Panc1 (cell line): ENCODE measurements at regions of chr11 and their contacts with region 1.

Region 1: DNA sequence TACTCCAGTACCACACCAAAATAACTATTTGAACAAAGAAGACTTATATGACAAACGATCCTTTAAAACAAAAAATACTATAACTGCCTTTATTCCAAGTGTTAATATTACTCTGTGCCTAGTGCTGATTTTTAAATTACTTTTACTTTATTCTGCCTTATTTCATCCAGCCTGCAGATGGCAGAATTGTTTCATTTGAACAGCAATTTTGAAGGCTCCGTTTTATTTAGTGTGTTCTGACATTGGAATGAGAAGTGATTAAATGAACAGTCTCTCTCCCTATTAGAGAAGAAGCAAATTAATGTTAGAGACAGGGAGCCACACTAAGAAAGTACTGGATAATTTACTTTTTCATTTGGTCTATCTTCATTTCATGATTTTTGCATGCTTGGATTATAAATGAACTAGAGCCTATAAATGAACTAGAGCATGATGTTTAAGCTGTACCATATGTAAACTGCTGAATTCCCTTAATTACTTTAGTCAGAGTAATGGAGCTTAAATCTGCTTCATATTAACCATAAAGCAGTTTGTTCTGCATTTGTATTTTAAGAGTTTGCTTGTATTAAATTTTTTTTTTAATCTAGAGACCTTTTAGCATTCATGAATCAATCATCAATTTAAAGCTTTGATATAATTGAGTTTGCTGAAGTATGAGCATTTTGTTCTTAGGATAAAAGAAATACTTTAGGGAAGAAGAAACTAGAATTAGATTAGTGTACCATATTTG is 9.8 kb downstream of the PDHX start:
- DNase-seq: peak; percentile 47
- ATAC-seq: peak; percentile 83
- H3K4me3 ChIP-seq: no peak overlapping the region
- H3K27ac ChIP-seq: peak overlapping the region; percentile 90
- H3K4me1 ChIP-seq: peaks cover 75% of the 10 kb centered on the region
- H3K27me3 ChIP-seq: no peaks in the 10 kb centered on the region
- CTCF ChIP-seq: peak; percentile 74; the same call in 1 of the 2 replicates

Region 2: DNA sequence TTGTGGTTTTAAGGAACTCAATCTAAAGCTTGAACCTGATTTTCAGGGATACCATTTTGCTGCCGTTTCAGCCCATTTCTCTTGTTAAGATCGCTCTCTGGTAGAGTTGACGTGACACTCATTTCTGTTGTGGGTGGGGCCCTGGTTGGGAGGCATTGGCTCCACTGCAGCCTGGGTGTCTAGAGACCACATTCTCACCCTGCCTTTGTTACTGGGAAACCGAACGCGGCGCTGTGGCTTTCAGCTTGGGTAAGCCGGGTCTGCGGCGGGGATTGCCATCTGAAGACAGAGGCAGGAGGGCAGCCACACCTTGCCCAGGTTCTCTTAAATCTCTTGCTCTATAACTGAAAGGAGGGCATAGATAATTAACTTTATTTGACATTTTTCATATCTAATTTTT is 302.2 kb before region 1 on chr11:
- CTCF ChIA-PET with region 1: no interaction called
- POLR2A ChIA-PET with region 1: no interaction called
- in situ Hi-C with region 1: no loop called
- intact Hi-C with region 1: no loop called
- DNase-seq: no peak
- ATAC-seq: no peak
- H3K4me3 ChIP-seq: no peak overlapping the region
- H3K27ac ChIP-seq: no peak overlapping the region
- H3K4me1 ChIP-seq: no peaks in the 10 kb centered on the region; the same call in 1 of the 2 replicates
- H3K27me3 ChIP-seq: no peaks in the 10 kb centered on the region
- CTCF ChIP-seq: no peak

Region 3: DNA sequence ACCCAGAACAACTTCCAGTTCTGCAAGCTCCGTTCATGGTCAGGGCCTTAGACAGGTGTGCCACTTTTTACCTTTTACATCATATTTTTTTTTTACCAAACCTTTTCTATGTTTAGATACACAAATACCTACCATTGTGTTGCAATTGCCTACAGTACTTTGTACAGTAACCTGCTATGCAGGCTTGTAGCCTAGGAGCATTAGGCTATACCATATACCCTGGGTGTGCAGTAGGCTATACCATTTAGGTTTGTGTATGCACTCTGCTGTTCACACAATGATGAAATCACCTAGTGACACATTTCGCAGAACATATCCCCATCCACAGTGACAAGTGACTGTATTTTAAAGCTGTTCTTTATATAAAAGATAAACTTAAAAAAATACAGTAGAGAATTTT is 39.7 kb before region 1 on chr11:
- CTCF ChIA-PET with region 1: no interaction called
- POLR2A ChIA-PET with region 1: no interaction called
- in situ Hi-C with region 1: no loop called
- intact Hi-C with region 1: no loop called
- DNase-seq: no peak
- ATAC-seq: peak; percentile 51; the same call in 1 of the 2 replicates
- H3K4me3 ChIP-seq: no peak overlapping the region
- H3K27ac ChIP-seq: no peak overlapping the region
- H3K4me1 ChIP-seq: no peaks in the 10 kb centered on the region; the same call in 1 of the 2 replicates
- H3K27me3 ChIP-seq: no peaks in the 10 kb centered on the region
- CTCF ChIP-seq: no peak

Region 4: DNA sequence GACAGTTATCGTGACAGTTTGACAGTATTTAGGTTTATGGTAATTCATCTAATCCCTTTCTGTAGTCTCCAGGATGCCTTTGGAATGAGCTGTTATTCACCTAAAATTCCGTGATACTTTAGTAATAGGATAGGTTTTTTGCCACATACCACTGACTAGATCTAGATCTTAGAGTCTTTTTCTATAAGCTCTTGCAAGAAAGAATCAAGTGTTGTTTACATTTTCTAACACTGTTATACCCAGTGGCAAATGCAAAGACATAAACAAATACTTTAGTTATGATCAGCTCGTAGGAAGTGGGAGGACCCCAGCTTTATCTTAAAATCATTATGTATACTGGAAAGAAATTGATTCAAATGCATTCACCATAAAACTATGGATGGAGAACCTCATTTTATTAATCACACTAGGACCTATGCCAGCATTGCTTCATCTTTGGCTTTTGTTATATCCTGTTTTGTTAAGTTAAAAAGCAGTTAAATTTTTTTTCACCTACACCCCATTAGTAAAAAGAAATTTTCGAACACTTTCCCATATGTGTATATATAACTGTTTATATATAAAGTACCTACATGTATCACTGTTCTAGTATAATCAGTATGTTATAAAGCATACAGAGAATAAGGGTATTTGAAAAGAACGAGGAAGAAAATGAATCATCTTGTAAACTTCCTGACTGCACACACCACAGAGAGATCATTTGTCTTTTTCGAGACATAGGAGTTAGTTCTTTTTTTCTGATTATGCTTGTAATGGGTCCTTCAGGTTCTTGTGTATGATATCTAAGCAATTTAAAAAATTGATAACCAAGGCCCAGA is 51.0 kb after region 1 on chr11:
- CTCF ChIA-PET with region 1: no interaction called
- POLR2A ChIA-PET with region 1: no interaction called
- in situ Hi-C with region 1: loop called (anchors 5 kb)
- intact Hi-C with region 1: no loop called
- DNase-seq: peak; percentile 92
- ATAC-seq: peak; percentile 88
- H3K4me3 ChIP-seq: peak overlapping the region in 1 of 2 experiments; percentile 2; a peak in 1 of 4 replicates
- H3K27ac ChIP-seq: peak overlapping the region; percentile 100
- H3K4me1 ChIP-seq: peaks cover 46% of the 10 kb centered on the region
- H3K27me3 ChIP-seq: no peaks in the 10 kb centered on the region
- CTCF ChIP-seq: no peak

Region 5: DNA sequence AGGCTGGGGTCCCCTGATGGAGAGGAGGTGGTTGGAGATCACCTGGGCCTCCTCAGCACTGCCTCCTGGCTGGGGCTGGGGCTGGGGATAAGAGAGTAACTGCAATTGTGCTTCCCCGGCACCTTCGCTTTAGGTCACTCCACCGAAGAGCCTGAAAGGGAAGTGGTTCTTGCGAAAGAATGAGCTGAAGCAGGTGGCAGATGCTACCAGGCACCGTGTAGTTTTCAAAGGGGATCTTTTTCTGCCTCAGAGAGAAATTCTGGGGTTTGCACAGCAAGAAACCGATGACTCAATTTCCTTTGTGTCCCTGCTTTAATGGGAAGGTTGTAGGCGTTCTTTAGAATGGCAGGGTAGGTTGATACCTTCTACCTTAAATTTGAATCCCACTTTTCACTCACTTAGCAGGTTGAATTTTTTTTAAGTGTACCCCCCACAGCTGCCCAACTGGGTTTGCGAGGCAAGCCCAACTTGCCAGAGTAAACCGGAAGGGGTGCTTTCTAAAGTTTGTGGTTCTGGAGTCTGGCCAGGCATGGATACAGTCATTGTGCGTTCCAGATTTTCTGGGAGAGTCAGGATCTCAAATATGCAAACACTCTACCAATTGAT is 218.0 kb after region 1 on chr11:
- CTCF ChIA-PET with region 1: no interaction called
- POLR2A ChIA-PET with region 1: interaction called, 3 read pairs
- in situ Hi-C with region 1: no loop called
- intact Hi-C with region 1: loop called (anchors 5 kb)
- DNase-seq: no peak
- ATAC-seq: no peak
- H3K4me3 ChIP-seq: peak overlapping the region; percentile 95 to 98
- H3K27ac ChIP-seq: peak overlapping the region; percentile 97
- H3K4me1 ChIP-seq: peaks cover 68% of the 10 kb centered on the region
- H3K27me3 ChIP-seq: no peaks in the 10 kb centered on the region
- CTCF ChIP-seq: 0 out of 2 replicates have a peak, but pooled peaks have one; percentile 5

Region 6: DNA sequence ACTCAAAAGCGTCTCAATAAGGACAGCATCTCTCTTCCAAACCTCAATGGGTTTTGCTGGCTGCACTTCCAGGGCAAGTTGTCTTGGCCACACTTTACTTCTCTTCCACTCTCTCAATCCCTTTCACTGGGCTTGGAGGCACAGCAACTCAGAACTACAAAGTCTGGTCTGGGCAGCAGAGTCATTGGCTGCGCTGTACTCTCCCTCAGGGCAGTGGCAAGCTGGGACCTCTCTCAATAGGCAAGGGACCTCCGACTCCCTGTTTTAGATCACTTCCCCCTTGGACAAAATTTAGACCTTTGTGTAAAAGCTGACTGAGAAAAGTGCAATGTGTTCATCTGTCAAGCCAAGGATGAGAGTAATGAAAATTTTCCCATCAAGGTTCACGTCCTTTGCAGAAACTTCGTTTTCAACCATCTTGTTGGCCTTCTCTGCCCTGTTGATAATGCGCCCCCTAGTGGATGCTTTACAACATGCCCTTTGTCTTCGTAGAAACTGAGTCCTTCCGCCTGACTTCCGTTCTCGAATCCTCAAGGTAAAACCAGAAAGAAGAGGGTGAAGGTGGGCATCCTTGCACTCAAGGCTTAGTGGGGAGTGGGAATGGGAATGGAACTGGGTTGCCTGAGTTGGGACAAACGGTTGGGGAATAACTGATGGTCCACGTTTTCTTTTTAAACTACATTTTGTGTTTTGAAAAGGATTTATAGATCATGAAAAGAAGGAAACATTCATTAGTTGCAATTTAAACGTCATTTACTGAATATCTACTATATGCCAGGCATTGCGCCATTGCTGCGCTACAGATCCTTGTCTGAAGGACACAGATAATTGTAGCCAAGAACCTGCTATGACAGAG is 311.8 kb after region 1 on chr11:
- CTCF ChIA-PET with region 1: interaction called, 3 read pairs
- POLR2A ChIA-PET with region 1: interaction called, 3 read pairs
- in situ Hi-C with region 1: no loop called
- intact Hi-C with region 1: loop called (anchors 5 kb)
- DNase-seq: no peak
- ATAC-seq: no peak
- H3K4me3 ChIP-seq: no peak overlapping the region
- H3K27ac ChIP-seq: peak overlapping the region; percentile 25
- H3K4me1 ChIP-seq: no peaks in the 10 kb centered on the region; the same call in 1 of the 2 replicates
- H3K27me3 ChIP-seq: no peaks in the 10 kb centered on the region
- CTCF ChIP-seq: peak; percentile 85

Region 7: GRCh38 chr11:35391922-35392813 is 465.9 kb after region 1 on chr11:
- CTCF ChIA-PET with region 1: no interaction called
- POLR2A ChIA-PET with region 1: no interaction called
- in situ Hi-C with region 1: no loop called
- intact Hi-C with region 1: loop called (anchors 2 kb)
- DNase-seq: peak; percentile 61
- ATAC-seq: peak; percentile 91
- H3K4me3 ChIP-seq: no peak overlapping the region; a peak in 1 of 4 replicates
- H3K27ac ChIP-seq: peak overlapping the region; percentile 77
- H3K4me1 ChIP-seq: peaks cover 28% of the 10 kb centered on the region
- H3K27me3 ChIP-seq: no peaks in the 10 kb centered on the region
- CTCF ChIP-seq: peak; percentile 90

Region 8: DNA sequence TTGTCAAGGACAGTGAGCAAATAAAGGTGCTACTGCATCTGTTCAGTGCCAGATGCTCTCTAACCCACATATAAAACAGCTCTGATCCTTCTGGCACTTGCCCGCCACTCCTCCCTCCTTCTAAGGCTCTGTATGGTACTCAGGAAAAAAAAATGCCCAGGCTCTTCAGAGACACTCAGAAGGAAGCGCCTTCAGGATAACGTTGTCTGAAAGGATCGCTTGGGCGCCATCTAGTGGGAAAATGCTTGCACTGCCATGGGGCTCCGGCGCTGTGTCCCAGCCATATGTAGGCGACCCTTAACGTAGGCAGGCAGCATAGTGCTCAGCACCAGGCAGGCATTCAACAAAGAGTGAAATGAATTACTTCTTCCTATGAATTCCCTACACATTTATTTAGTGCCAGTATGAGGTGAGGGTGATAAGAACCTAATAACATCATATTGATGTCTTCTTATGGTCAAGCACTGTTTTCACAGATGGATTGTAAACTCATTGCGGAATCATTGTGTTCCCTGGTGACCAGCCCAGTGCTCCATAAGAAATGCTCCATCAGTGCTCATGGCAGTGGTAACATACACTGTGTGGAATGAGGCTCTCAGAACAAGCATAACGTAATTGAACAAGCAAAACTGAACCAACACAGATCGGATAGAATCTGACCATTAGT is 559.5 kb after region 1 on chr11:
- CTCF ChIA-PET with region 1: interaction called, 8 read pairs
- POLR2A ChIA-PET with region 1: no interaction called
- in situ Hi-C with region 1: no loop called
- intact Hi-C with region 1: loop called (anchors 5 kb)
- DNase-seq: peak; percentile 48
- ATAC-seq: peak; percentile 99
- H3K4me3 ChIP-seq: no peak overlapping the region
- H3K27ac ChIP-seq: no peak overlapping the region
- H3K4me1 ChIP-seq: no peaks in the 10 kb centered on the region
- H3K27me3 ChIP-seq: peaks cover 19% of the 10 kb centered on the region
- CTCF ChIP-seq: peak; percentile 96